PC-9 (cell line): ENCODE measurements at regions of chr4 and their contacts with region 1.

Region 1: DNA sequence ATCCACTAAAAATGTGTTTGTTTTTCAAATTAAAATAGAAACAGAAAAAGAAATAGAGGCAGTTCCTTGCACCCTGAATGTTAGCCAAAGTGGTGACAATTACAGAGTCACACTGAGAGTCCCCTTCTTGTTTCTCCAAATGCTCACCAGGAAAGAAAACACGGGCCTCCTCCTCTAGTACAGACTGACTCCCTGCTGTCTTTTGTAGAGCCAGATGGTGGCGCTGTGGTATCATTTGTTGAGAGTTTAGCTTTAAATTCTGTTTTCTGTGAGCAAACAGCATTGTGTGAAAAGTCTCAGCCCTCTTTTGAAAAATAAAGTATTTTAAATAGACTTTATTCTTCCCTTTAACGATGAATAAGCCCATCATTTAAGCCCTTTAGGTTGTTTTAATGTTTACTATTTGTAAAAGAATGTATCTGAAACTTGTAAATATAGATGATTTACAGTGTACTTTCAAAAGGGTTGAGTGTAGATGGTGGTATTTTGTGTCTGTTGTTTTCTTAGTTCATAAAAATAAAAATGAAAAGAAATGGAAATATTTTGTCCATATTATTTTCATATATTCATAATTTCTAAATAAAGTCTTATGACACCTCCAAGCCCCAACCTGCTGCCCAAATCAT is 36.9 kb upstream of the ATOH1 start:
- DNase-seq: peak; percentile 22 to 34
- H3K4me3 ChIP-seq: no peak overlapping the region
- H3K27ac ChIP-seq: no peak overlapping the region
- H3K4me1 ChIP-seq: no peaks in the 10 kb centered on the region
- H3K27me3 ChIP-seq: no peaks in the 10 kb centered on the region
- CTCF ChIP-seq: peak; percentile 82

Region 2: DNA sequence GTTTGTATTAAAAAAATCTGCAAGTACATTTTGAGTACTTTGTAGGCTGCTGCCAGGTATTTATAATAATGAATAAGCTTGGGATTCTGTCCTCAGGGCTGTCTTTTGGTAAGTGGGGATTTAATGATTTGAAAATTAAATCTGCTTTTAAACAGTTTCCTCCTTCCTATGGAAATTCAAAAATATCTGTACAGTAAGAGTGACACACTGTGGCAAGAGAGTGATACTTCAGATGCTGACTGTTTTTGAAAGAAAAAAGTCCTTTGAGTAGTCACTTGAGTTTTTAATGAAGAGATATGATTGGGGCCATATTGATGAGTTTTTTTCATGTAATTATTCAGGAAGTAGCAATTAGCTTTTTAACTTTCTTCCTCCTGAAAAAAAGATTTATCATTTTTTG is 465.1 kb after region 1 on chr4:
- CTCF ChIA-PET with region 1: no interaction called
- POLR2A ChIA-PET with region 1: no interaction called
- intact Hi-C with region 1: loop called (anchors 10 kb)
- DNase-seq: no peak
- H3K4me3 ChIP-seq: no peak overlapping the region
- H3K27ac ChIP-seq: no peak overlapping the region
- H3K4me1 ChIP-seq: no peaks in the 10 kb centered on the region
- H3K27me3 ChIP-seq: no peaks in the 10 kb centered on the region
- CTCF ChIP-seq: peak; percentile 38; the same call in 1 of the 2 replicates